PC-3 (cell line): ENCODE measurements at regions of chr1 and their contacts with region 1.

Region 1: GRCh38 chr1:11805447-11806306 is at the starts of genes CLCN6 and MTHFR:
- DNase-seq: peak; percentile 99
- ATAC-seq: peak; percentile 86
- H3K4me3 ChIP-seq: peak within 1 kb of the TSS; percentile 83
- H3K27ac ChIP-seq: peak within 1 kb of the TSS; percentile 91
- H3K4me1 ChIP-seq: peaks cover 50% of the 10 kb centered on the region
- H3K27me3 ChIP-seq: no peaks in the 10 kb centered on the region
- CTCF ChIP-seq: no peak
- total RNA-seq, gene CLCN6: 6.1 and 12.9 TPM in 2 replicates
- total RNA-seq, gene MTHFR: 13.2 and 24.8 TPM in 2 replicates

Region 2: GRCh38 chr1:11735854-11736745 is 69.6 kb before region 1 on chr1 and contains the start of gene AGTRAP:
- CTCF ChIA-PET with region 1: no interaction called
- POLR2A ChIA-PET with region 1: no interaction called
- intact Hi-C with region 1: loop called (anchors 5 kb)
- DNase-seq: peak; percentile 86
- ATAC-seq: peak; percentile 77
- H3K4me3 ChIP-seq: peak within 1 kb of the TSS; percentile 84
- H3K27ac ChIP-seq: peak within 1 kb of the TSS; percentile 86
- H3K4me1 ChIP-seq: peaks cover 9% of the 10 kb centered on the region
- H3K27me3 ChIP-seq: no peaks in the 10 kb centered on the region
- CTCF ChIP-seq: no peak
- total RNA-seq, gene AGTRAP: 73.5 and 76.7 TPM in 2 replicates

Region 3: GRCh38 chr1:11784993-11785769 is 20.5 kb before region 1 on chr1:
- CTCF ChIA-PET with region 1: interaction called, 4 read pairs
- POLR2A ChIA-PET with region 1: interaction called, 5 read pairs
- intact Hi-C with region 1: loop called (anchors 1 kb)
- DNase-seq: peak; percentile 61
- ATAC-seq: peak; percentile 79
- H3K4me3 ChIP-seq: no peak overlapping the region
- H3K27ac ChIP-seq: no peak overlapping the region
- H3K4me1 ChIP-seq: peaks cover 12% of the 10 kb centered on the region; the same call in 1 of the 2 replicates
- H3K27me3 ChIP-seq: no peaks in the 10 kb centered on the region
- CTCF ChIP-seq: peak; percentile 90

Region 4: DNA sequence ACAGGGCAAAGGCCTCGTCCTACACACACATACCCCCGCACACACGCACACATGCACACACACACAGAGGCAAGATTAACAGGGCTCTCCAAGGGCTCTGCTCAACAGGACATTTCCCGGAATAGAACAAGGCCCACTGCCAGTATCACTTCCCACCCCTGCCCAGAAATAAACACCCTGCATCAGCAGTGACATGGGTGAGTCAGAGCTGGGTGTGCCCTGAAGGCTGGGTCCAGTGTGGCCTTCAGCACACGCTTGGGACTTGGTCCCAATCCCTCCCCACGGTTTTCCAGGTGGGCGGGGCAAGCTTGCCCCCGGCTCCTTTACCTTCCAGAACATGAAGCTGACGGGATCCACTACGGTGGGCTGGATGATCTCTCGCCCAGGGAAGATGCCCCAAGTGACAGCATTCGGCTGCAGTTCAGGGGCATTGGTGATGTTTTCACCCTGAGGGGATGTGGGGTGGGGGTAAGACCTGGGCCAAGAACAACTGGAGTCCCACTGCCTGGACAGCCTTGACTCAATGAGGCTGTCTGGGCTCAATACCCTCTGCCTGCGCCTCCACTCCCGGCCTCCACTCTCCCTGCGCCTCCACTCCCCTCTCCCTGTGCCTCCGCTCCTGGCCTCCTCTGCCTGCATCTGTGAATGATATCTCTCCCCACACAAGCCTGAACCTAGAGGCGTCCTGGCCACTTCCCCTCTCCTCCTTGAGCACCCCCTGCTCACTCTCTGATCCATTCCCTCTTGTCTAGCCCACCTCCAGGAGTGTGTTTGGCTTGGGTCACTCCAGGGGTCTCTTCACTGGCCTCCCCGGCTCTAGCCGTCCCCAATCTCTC is 14.6 kb before region 1 on chr1:
- CTCF ChIA-PET with region 1: no interaction called
- POLR2A ChIA-PET with region 1: interaction called, 15 read pairs
- intact Hi-C with region 1: loop called (anchors 1 kb)
- DNase-seq: peak; percentile 91
- ATAC-seq: peak; percentile 95
- H3K4me3 ChIP-seq: no peak overlapping the region
- H3K27ac ChIP-seq: peak overlapping the region; percentile 82
- H3K4me1 ChIP-seq: peaks cover 28% of the 10 kb centered on the region
- H3K27me3 ChIP-seq: no peaks in the 10 kb centered on the region
- CTCF ChIP-seq: no peak

Region 5: DNA sequence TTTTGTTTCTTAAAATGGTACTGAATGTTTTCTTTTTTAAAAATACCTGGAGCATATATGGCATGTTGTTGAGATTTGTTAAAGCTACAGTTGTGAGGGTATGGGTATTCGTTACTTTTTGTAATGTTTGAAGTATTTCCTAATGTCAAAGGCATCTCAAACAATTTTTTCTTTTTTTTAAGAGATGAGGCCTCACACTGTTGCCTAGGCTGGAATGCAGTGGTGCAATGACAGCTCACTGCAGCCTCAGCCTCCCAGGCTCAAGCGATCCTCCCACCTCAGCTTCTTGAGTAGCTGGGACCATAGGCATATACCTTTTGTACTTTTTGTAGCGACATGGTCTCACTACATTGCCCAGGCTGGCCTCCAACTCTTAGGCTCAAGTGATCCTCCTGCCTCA is 16.4 kb after region 1 on chr1:
- CTCF ChIA-PET with region 1: no interaction called
- POLR2A ChIA-PET with region 1: interaction called, 5 read pairs
- intact Hi-C with region 1: loop called (anchors 2 kb)
- DNase-seq: no peak
- ATAC-seq: no peak
- H3K4me3 ChIP-seq: no peak overlapping the region
- H3K27ac ChIP-seq: peak overlapping the region; percentile 2; the same call in 1 of the 2 replicates
- H3K4me1 ChIP-seq: peaks cover 15% of the 10 kb centered on the region
- H3K27me3 ChIP-seq: no peaks in the 10 kb centered on the region
- CTCF ChIP-seq: no peak